ENCODE measurements at regions of chr5 and their contacts with region 1.

Region 1: GRCh38 chr5:77076961-77077823 is 9.9 kb downstream of the ZBED3 start:
- DNase-seq: peak; percentile 43 to 78
- H3K4me3 ChIP-seq: peak overlapping the region; percentile 59 to 63
- H3K27ac ChIP-seq: peak overlapping the region; percentile 65 to 69
- H3K4me1 ChIP-seq: peaks cover 0 to 13% (median 6%) of the 10 kb centered on the region in 4 donors
- H3K27me3 ChIP-seq: no peaks in the 10 kb centered on the region
- CTCF ChIP-seq: peak; percentile 55 to 57

Region 2: GRCh38 chr5:76974785-76975184 is 102.4 kb before region 1 on chr5:
- intact Hi-C with region 1: no loop called
- DNase-seq: no peak
- H3K4me3 ChIP-seq: no peak overlapping the region
- H3K27ac ChIP-seq: no peak overlapping the region
- H3K4me1 ChIP-seq: no peaks in the 10 kb centered on the region
- H3K27me3 ChIP-seq: no peaks in the 10 kb centered on the region
- CTCF ChIP-seq: no peak

Region 3: GRCh38 chr5:77491783-77492652 is 414.8 kb after region 1 on chr5 and contains the start of gene WDR41:
- intact Hi-C with region 1: loop called (anchors 5 kb)
- DNase-seq: peak; percentile 94 to 96
- H3K4me3 ChIP-seq: peak within 1 kb of the TSS; percentile 86 to 92
- H3K27ac ChIP-seq: peak within 1 kb of the TSS; percentile 96 to 97
- H3K4me1 ChIP-seq: peaks cover 0 to 15% (median 3%) of the 10 kb centered on the region in 4 donors
- H3K27me3 ChIP-seq: peaks cover 0 to 4% of the 10 kb centered on the region in 2 donors
- CTCF ChIP-seq: peak; percentile 93 to 95

Measured in tibial artery (tissue), 4 donors.